SK-N-SH (cell line): ENCODE measurements at regions of chr1 and their contacts with region 1.

Region 1: DNA sequence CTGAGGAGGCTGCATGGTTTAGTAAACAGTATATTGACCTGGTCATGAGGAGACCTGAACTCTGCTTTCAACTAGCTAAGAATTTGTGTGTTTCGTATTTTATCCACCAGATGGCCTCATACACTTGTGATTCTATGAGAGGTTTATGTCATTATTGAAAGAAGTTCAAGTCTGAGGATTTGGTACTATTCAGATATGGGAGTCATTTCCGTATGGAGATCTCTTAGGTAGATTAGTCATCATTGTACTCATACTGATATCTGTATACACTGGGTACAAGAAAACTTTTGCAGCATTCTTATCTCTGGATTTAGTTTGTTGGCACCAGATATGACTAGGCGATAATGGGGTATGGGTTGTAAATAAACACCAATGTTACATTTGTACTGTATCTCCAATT is 26.6 kb downstream of the ATF6 start:
- DNase-seq: peak; percentile 34
- H3K4me3 ChIP-seq: no peak overlapping the region
- H3K27ac ChIP-seq: peak overlapping the region in 1 of 2 experiments; percentile 31; a peak in 1 of 4 replicates
- H3K4me1 ChIP-seq: peaks cover 0 to 4% of the 10 kb centered on the region in 2 experiments; a peak in 2 of 4 replicates
- H3K27me3 ChIP-seq: no peaks in the 10 kb centered on the region
- CTCF ChIP-seq: peak; percentile 80
- EP300 ChIP-seq: 0 out of 4 replicates have a peak, but pooled peaks of 1 of the 2 experiments have one; percentile 5
- RAD21 ChIP-seq: peak; percentile 85

Region 2: GRCh38 chr1:161691846-161692245 is 100.9 kb before region 1 on chr1:
- CTCF ChIA-PET with region 1: no interaction called
- POLR2A ChIA-PET with region 1: no interaction called
- DNase-seq: no peak
- H3K4me3 ChIP-seq: no peak overlapping the region
- H3K27ac ChIP-seq: no peak overlapping the region
- H3K4me1 ChIP-seq: no peaks in the 10 kb centered on the region
- H3K27me3 ChIP-seq: peaks cover 29% of the 10 kb centered on the region
- CTCF ChIP-seq: no peak
- EP300 ChIP-seq: no peak
- RAD21 ChIP-seq: no peak

Region 3: DNA sequence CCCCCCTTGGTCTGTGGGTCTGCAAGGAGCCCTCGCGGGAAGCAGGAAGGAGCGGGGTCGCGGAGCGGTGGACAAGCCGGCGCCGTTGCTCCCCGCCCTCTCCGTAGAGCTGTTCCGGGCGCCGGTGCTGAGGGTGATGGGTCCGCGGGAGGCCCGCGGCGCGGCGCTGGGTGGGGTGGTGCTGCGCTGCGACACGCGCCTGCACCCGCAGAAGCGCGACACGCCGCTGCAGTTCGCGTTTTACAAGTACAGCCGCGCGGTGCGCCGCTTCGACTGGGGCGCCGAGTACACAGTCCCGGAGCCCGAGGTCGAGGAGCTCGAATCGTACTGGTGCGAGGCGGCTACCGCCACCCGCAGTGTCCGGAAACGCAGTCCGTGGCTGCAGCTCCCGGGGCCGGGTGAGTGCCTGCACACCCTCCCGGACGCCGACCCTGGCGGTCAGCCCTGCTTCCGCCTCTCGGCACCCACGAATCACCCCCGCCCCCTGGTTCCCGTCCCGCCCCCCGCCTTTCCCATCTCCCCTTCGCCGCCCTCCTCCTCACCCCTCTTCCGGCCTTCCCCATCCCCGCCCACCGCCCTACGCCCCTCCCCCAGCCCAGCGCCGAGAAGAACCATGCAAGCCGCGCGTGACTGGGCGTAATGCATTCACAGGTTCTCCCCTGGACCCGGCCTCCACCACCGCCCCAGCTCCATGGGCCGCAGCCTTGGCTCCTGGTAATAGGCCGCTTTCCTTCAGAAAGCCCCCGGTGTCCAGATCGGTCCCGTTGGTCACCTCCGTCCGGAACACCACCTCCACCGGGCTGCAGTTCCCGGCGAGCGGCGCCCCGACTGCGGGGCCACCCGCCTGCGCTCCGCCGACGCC is 65.9 kb before region 1 on chr1:
- CTCF ChIA-PET with region 1: no interaction called
- POLR2A ChIA-PET with region 1: no interaction called
- DNase-seq: peak; percentile 96
- H3K4me3 ChIP-seq: peak overlapping the region; percentile 73 to 79
- H3K27ac ChIP-seq: peak overlapping the region; percentile 69 to 84
- H3K4me1 ChIP-seq: peaks cover 13 to 14% of the 10 kb centered on the region in 2 experiments; a peak in 2 of 4 replicates
- H3K27me3 ChIP-seq: no peaks in the 10 kb centered on the region
- CTCF ChIP-seq: no peak
- EP300 ChIP-seq: no peak
- RAD21 ChIP-seq: no peak

Region 4: DNA sequence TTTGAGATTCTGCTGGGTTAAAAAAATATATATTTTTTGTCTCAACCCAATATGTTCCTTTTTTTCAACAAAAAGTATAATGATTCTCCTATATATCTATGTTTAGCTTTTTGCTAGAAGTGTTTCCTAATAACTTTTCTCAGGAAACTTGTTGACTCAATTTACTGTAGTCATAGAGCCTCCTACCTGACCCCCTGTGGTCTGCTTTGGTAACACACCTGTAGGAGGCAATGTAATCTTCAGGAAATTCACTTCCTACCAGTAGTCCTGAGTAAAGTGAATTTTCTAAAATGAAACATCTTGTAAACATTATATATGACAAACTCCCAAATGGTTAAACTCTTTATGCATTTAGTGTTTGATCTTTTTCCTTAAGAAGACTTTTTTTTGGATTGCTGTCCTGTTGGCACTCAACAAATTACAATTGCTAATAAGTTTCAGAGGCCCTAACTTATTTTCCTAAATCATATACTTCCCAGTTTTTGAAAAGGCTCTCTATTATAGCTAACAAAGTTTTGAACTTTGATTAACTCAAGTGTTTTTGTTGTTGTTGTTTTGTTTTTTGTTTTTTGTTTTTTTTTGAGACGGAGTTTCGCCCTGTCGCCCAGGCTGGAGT is 112.6 kb after region 1 on chr1:
- CTCF ChIA-PET with region 1: interaction called, 12 read pairs
- POLR2A ChIA-PET with region 1: no interaction called
- DNase-seq: peak; percentile 38
- H3K4me3 ChIP-seq: no peak overlapping the region
- H3K27ac ChIP-seq: no peak overlapping the region
- H3K4me1 ChIP-seq: peaks cover 6 to 9% of the 10 kb centered on the region in 2 experiments; a peak in 2 of 4 replicates
- H3K27me3 ChIP-seq: no peaks in the 10 kb centered on the region
- CTCF ChIP-seq: peak; percentile 58
- EP300 ChIP-seq: no peak
- RAD21 ChIP-seq: peak; percentile 34

Region 5: GRCh38 chr1:162023547-162024501 is 231.1 kb after region 1 on chr1 and contains the start of gene OLFML2B:
- CTCF ChIA-PET with region 1: interaction called, 263 read pairs
- POLR2A ChIA-PET with region 1: no interaction called
- DNase-seq: peak; percentile 88
- H3K4me3 ChIP-seq: peak within 1 kb of the TSS; percentile 68 to 96
- H3K27ac ChIP-seq: peak within 1 kb of the TSS in 1 of 2 experiments; percentile 61; a peak in 2 of 4 replicates
- H3K4me1 ChIP-seq: peaks cover 22 to 26% of the 10 kb centered on the region in 2 experiments
- H3K27me3 ChIP-seq: no peaks in the 10 kb centered on the region
- CTCF ChIP-seq: peak; percentile 62
- EP300 ChIP-seq: no peak
- RAD21 ChIP-seq: peak; percentile 60
- polyA plus RNA-seq, gene OLFML2B: 5.7 and 7.3 TPM in 2 replicates

Region 6: DNA sequence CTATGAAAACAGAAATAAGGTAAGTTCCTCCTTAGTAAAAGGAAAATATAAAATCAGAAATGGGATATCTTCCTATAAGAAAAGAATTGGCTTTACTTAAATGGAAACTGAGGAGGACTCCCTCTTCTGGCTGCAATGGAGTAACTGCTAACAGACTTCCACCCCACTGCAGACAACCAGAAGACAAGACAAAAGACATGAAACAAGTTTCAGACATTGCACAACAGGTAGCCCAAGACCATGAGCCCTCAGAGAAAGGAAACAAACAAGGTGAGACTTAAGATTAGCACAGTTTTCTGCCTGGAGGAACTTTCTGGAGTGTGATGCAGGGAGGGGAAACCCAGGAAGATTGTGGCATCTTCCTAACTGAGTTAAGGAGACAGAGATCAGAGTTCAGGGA is 247.9 kb after region 1 on chr1:
- CTCF ChIA-PET with region 1: interaction called, 263 read pairs
- POLR2A ChIA-PET with region 1: interaction called, 4 read pairs
- DNase-seq: no peak
- H3K4me3 ChIP-seq: no peak overlapping the region
- H3K27ac ChIP-seq: no peak overlapping the region
- H3K4me1 ChIP-seq: peaks cover 6 to 8% of the 10 kb centered on the region in 2 experiments; a peak in 1 of 4 replicates
- H3K27me3 ChIP-seq: no peaks in the 10 kb centered on the region
- CTCF ChIP-seq: peak; percentile 54
- EP300 ChIP-seq: no peak
- RAD21 ChIP-seq: peak; percentile 10; the same call in 1 of the 2 replicates

Region 7: DNA sequence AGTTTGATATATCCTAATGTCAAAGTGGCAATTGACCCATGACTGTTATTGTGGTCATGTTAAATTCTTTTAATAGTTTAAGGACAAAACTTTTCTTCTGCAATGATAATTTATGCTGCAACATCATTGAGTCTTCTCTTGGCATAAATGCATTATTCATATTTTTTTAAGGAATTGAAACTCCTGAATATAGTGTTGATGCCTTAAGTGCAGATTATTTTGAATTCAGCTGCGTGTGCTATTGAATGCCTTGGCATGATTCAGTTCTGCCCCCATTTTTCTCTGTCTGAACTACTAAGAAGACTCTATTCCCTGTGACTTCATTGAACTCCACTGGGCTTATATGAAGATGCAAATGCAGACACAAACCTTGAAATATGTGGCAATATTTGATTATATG is 254.2 kb after region 1 on chr1:
- CTCF ChIA-PET with region 1: interaction called, 20 read pairs
- POLR2A ChIA-PET with region 1: no interaction called
- DNase-seq: no peak
- H3K4me3 ChIP-seq: no peak overlapping the region
- H3K27ac ChIP-seq: no peak overlapping the region
- H3K4me1 ChIP-seq: no peaks in the 10 kb centered on the region
- H3K27me3 ChIP-seq: no peaks in the 10 kb centered on the region
- CTCF ChIP-seq: no peak
- EP300 ChIP-seq: no peak
- RAD21 ChIP-seq: no peak